CD4-positive, alpha-beta T cell (primary cell): ENCODE measurements at regions of chr2 and their contacts with region 1.

Region 1: DNA sequence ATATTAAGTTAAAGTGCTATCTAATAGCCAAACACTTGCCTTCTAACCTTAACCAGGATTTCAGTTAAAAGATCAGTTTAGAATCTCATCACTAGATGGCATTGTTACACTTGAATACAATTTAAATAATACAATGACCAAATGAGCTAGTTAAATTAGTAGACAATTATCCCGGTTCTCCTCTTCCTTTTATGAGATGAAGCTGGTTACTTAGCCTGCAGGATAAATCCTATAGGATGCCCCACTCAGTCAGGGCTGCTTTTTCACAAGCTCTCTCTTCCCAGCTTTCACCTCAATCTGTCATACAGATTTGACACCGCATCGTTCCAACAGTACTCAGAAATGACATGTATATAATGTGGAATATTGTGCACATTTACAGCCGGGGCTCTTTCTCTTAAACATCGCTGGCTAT is 678.8 kb downstream of the KCNJ3 start:
- DNase-seq: peak in 2 of 14 experiments; percentile 5 to 7
- ATAC-seq: no peak
- H3K4me3 ChIP-seq: no peak overlapping the region
- H3K4me3 Mint-ChIP-seq: no peak overlapping the region
- H3K27ac ChIP-seq: no peak overlapping the region
- H3K27ac Mint-ChIP-seq: no peak overlapping the region
- H3K4me1 ChIP-seq: no peaks in the 10 kb centered on the region
- H3K4me1 Mint-ChIP-seq: no peaks in the 10 kb centered on the region
- H3K27me3 ChIP-seq: no peaks in the 10 kb centered on the region
- H3K27me3 Mint-ChIP-seq: no peaks in the 10 kb centered on the region
- CTCF ChIP-seq: peak; percentile 19

Region 2: GRCh38 chr2:156589381-156590079 is 1212.3 kb after region 1 on chr2:
- CTCF ChIA-PET with region 1: no interaction called
- POLR2A ChIA-PET with region 1: no interaction called
- intact Hi-C with region 1: loop called in 1 of 2 experiments (anchors 1 kb)
- DNase-seq: peak in 7 of 14 experiments; percentile 0 to 65 (median 19)
- ATAC-seq: peak; percentile 58
- H3K4me3 ChIP-seq: no peak overlapping the region
- H3K4me3 Mint-ChIP-seq: no peak overlapping the region
- H3K27ac ChIP-seq: no peak overlapping the region
- H3K27ac Mint-ChIP-seq: no peak overlapping the region
- H3K4me1 ChIP-seq: no peaks in the 10 kb centered on the region
- H3K4me1 Mint-ChIP-seq: peaks cover 5% of the 10 kb centered on the region
- H3K27me3 ChIP-seq: no peaks in the 10 kb centered on the region
- H3K27me3 Mint-ChIP-seq: no peaks in the 10 kb centered on the region
- CTCF ChIP-seq: peak; percentile 78

Region 3: GRCh38 chr2:156892467-156893281 is 1515.4 kb after region 1 on chr2:
- CTCF ChIA-PET with region 1: no interaction called
- POLR2A ChIA-PET with region 1: no interaction called
- intact Hi-C with region 1: loop called (anchors 5 kb)
- DNase-seq: peak in 3 of 14 experiments; percentile 18 to 28 (median 19)
- ATAC-seq: peak; percentile 39
- H3K4me3 ChIP-seq: no peak overlapping the region
- H3K4me3 Mint-ChIP-seq: no peak overlapping the region
- H3K27ac ChIP-seq: no peak overlapping the region
- H3K27ac Mint-ChIP-seq: no peak overlapping the region
- H3K4me1 ChIP-seq: no peaks in the 10 kb centered on the region
- H3K4me1 Mint-ChIP-seq: peaks cover 18% of the 10 kb centered on the region
- H3K27me3 ChIP-seq: peaks cover 2 to 33% of the 10 kb centered on the region in 2 experiments
- H3K27me3 Mint-ChIP-seq: peaks cover 52% of the 10 kb centered on the region
- CTCF ChIP-seq: no peak

Region 4: GRCh38 chr2:157055660-157056199 is 1678.5 kb after region 1 on chr2:
- CTCF ChIA-PET with region 1: no interaction called
- POLR2A ChIA-PET with region 1: no interaction called
- intact Hi-C with region 1: loop called in 1 of 2 experiments (anchors 10 kb)
- DNase-seq: no peak
- ATAC-seq: no peak
- H3K4me3 ChIP-seq: no peak overlapping the region
- H3K4me3 Mint-ChIP-seq: no peak overlapping the region
- H3K27ac ChIP-seq: no peak overlapping the region
- H3K27ac Mint-ChIP-seq: no peak overlapping the region
- H3K4me1 ChIP-seq: no peaks in the 10 kb centered on the region
- H3K4me1 Mint-ChIP-seq: no peaks in the 10 kb centered on the region
- H3K27me3 ChIP-seq: no peaks in the 10 kb centered on the region
- H3K27me3 Mint-ChIP-seq: peaks cover 8% of the 10 kb centered on the region
- CTCF ChIP-seq: peak; percentile 43

Region 5: DNA sequence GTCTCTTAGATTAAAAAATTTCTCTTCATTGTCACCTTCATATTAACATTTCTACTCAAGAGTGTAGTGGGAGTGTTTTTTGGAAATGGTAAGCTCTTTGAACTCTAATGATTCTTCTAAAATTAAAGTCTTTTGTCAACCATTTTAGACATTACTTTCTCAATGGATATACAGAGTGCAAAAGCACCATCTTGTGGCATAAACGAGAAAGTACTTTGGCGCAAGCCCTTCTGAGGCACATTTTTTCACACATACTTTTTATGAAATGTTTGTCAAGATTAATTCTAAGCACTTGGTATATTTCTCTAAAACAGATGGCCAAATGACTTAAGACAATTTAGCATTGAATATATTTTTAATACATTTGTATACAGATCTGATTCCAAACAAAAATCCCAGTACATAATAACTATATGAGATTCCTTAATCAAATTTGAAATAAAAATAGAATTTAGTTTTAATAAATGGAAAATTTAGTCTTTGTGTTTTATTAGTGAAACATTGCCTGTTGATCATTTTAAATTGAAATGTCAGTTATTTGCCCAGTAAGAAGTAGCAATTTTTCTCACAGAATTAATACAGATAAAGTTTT is 1816.9 kb after region 1 on chr2:
- CTCF ChIA-PET with region 1: no interaction called
- POLR2A ChIA-PET with region 1: no interaction called
- intact Hi-C with region 1: loop called in 1 of 2 experiments (anchors 5 kb)
- DNase-seq: peak in 4 of 14 experiments; percentile 4 to 53 (median 40)
- ATAC-seq: peak; percentile 48
- H3K4me3 ChIP-seq: no peak overlapping the region
- H3K4me3 Mint-ChIP-seq: no peak overlapping the region
- H3K27ac ChIP-seq: no peak overlapping the region
- H3K27ac Mint-ChIP-seq: no peak overlapping the region
- H3K4me1 ChIP-seq: no peaks in the 10 kb centered on the region
- H3K4me1 Mint-ChIP-seq: no peaks in the 10 kb centered on the region
- H3K27me3 ChIP-seq: no peaks in the 10 kb centered on the region
- H3K27me3 Mint-ChIP-seq: no peaks in the 10 kb centered on the region
- CTCF ChIP-seq: peak; percentile 65